Activated naive CD4-positive, alpha-beta T cell treated with anti-CD3 and anti-CD28 coated beads for 36 hours (primary cell): ENCODE measurements at regions of chr17 and their contacts with region 1.

Region 1: DNA sequence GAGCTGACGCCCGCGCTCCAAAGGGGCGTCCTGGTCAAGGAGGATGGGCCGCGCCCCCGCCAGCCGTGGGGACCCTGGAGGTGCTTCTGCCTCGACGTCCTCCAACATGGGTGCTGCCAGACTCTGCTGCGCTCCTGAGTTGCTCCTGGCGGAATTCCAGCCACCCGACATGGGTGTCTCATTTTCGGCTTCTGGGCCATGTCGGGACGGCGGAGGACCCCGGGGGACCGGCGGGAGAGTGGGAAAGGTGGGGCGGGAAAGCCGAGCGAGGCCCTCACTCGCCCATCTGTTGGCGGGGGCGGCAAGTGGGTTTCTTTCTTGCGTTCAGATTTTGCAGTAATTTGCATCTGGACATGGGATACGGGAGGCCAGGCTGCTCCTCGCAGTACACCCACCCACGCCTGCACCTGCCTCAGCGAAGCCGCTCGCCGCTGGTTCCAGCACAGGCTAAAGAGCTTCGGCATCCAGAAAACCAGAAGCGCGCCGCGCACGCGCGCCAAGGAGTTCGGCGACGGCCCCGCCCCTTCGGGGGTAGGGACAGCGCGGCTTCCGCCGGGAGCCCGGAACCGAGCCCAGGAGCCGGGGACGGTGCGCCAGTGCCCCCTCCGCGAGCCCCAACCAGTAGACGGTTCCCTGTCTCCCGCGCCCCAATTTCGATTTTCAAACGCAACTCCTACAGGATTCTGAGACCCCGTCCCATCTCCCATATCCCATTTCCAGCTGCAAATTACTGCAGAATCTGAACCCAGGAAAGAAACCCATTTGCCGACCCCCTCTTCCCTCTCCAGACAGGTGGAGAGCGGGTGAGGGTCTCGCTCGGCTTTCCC is at the start of gene ARMC7:
- DNase-seq: peak; percentile 93
- H3K4me3 Mint-ChIP-seq: peak within 1 kb of the TSS; percentile 90
- H3K27ac Mint-ChIP-seq: peak within 1 kb of the TSS; percentile 91
- H3K4me1 Mint-ChIP-seq: peaks cover 29% of the 10 kb centered on the region
- H3K27me3 Mint-ChIP-seq: no peaks in the 10 kb centered on the region
- total RNA-seq, gene ARMC7: 3.8 to 4.9 TPM

Region 2: GRCh38 chr17:74981979-74982662 is 127.5 kb before region 1 on chr17:
- CTCF ChIA-PET with region 1: no interaction called
- intact Hi-C with region 1: loop called (anchors 5 kb)
- DNase-seq: peak; percentile 86
- H3K4me3 Mint-ChIP-seq: peak overlapping the region; percentile 89
- H3K27ac Mint-ChIP-seq: peak overlapping the region; percentile 54
- H3K4me1 Mint-ChIP-seq: peaks cover 10% of the 10 kb centered on the region
- H3K27me3 Mint-ChIP-seq: peaks cover 1% of the 10 kb centered on the region

Region 3: GRCh38 chr17:75059369-75060345 is 50.0 kb before region 1 on chr17:
- CTCF ChIA-PET with region 1: interaction called, 13 read pairs
- intact Hi-C with region 1: no loop called
- DNase-seq: no peak
- H3K4me3 Mint-ChIP-seq: no peak overlapping the region
- H3K27ac Mint-ChIP-seq: no peak overlapping the region
- H3K4me1 Mint-ChIP-seq: peaks cover 19% of the 10 kb centered on the region
- H3K27me3 Mint-ChIP-seq: no peaks in the 10 kb centered on the region

Region 4: DNA sequence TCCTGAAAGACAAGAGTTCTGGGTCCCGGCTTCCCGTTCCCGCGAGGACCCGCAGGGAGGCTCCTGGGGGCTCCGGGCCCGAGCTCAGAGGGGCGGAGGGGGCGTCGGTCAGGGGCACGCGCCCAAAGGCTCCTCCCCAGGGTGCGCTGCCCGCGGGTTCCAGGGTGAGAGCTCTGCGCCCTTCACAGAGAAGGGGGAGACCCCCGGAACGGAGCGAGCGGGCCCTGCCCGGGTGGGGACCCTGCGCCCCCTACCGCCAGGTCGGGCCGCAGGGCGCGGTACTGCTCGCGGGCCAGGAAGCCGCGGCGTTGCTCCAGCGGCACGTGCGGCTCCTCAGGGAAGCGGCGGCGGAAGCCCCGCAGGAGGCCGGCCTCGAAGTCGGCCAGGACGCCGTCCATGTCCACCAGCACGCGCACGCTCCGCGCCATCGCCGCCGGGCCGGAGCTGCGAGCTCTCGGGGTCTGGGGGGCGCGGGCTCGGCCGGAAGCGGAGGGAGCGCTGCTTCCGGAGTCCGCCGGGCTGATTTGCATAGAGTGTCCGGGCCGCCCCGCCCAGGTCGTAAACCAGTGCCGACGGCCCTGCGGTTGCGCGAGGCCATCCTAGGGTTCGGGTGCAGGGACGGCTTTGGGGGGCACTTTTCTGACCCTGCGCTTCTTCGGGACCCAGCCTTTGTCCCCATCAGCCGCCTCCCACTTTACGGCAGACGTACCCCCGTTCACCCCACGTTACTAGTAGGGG is 21.8 kb after region 1 on chr17 and contains the start of gene NT5C:
- CTCF ChIA-PET with region 1: interaction called, 195 read pairs
- intact Hi-C with region 1: loop called (anchors 1 kb)
- DNase-seq: peak; percentile 71
- H3K4me3 Mint-ChIP-seq: peak within 1 kb of the TSS; percentile 85
- H3K27ac Mint-ChIP-seq: peak within 1 kb of the TSS; percentile 86
- H3K4me1 Mint-ChIP-seq: peaks cover 16% of the 10 kb centered on the region
- H3K27me3 Mint-ChIP-seq: no peaks in the 10 kb centered on the region
- total RNA-seq, gene NT5C: 49.7 to 55.2 TPM

Region 5: DNA sequence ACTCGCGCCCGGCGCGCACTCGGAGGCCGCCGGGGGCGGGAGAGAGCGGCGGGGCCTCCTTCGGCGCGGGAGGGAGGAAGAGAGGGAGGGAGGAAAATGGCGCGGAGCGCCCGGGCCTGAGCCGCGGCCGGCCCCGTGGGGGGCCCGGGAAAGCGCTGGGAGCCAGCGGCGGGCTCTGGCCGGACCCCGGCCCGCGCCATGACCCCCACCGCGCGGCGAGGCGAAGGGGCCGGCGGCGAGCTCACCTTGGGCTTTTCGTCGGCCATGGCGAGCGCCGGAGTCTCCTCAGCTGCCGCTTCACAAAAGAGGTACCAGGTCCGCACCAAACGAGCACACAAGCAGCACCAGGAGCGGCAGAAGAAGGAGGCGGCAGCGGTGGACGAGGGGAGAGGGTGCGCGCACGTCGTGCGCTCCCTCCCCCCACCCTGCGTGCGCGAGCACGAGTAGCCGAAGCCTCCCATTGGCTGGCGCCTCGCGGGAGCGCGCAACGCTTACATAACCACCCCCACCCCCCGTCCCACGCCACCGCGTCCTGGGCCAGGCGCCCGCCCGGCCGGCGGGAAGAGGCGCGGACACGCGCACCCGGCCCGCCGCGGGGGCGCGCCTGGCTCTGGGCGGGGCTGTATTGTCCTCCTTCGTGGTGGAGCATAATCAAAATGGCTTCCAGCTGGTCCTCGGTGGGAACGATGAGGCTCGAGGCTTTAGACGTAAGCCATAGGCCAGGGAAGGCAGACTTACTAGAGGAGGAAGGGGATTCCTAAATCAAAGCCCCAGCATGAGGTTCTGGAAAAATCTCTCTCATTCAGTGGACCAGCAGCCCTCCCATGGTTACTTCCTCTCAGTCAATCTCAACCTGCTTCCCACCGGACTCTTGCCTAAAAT is 73.2 kb after region 1 on chr17 and contains the start of gene SUMO2:
- CTCF ChIA-PET with region 1: interaction called, 10 read pairs
- intact Hi-C with region 1: no loop called
- DNase-seq: peak; percentile 97
- H3K4me3 Mint-ChIP-seq: peak within 1 kb of the TSS; percentile 92
- H3K27ac Mint-ChIP-seq: peak within 1 kb of the TSS; percentile 97
- H3K4me1 Mint-ChIP-seq: peaks cover 40% of the 10 kb centered on the region
- H3K27me3 Mint-ChIP-seq: no peaks in the 10 kb centered on the region
- total RNA-seq, gene SUMO2: 633 to 688 TPM

Region 6: DNA sequence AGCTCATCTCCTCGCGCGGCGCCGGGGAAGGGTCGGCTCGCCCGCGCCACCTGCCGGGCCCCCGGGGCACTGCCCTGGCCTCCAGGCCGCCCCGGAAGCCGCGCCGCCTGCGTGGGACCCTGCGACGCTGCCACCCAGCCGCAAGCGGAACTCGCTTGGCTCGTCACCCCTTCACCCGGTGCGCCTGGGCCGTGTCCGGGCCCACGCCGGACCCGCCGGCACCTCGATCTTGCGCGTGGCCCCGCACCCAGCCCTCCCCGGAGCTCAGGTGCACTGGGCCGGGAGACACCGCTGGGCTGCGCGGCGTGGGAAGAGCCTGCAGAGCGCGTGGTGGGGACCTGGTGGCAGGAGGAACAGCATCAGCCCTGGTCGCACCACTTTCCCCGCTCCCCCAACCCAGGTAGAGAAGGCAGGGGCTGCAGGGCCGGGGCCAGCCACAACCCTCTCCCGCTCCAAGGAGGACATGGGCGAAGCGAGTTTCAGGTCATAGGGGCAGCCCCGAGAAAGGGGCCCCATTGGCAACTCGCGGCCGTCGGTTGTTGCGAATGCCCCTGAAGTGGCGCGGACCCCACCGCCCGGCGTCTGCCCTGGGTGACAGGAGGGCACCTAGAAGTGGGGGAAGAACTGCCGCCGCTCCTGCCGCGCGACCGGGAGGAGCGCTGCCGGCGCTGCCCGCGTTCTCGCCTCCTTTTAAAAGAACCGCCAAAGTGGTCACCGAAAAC is 161.8 kb after region 1 on chr17:
- CTCF ChIA-PET with region 1: interaction called, 10 read pairs
- intact Hi-C with region 1: no loop called
- DNase-seq: peak; percentile 83
- H3K4me3 Mint-ChIP-seq: peak overlapping the region; percentile 76
- H3K27ac Mint-ChIP-seq: peak overlapping the region; percentile 70
- H3K4me1 Mint-ChIP-seq: peaks cover 35% of the 10 kb centered on the region
- H3K27me3 Mint-ChIP-seq: no peaks in the 10 kb centered on the region